ENCODE measurements at regions of chr2 and their contacts with region 1.

Region 1: GRCh38 chr2:52369185-52369584 is 1337.3 kb upstream of the NRXN1 start:
- DNase-seq: no peak
- H3K4me3 ChIP-seq: no peak overlapping the region
- H3K27ac ChIP-seq: no peak overlapping the region
- H3K4me1 ChIP-seq: no peaks in the 10 kb centered on the region
- H3K27me3 ChIP-seq: no peaks in the 10 kb centered on the region
- CTCF ChIP-seq: no peak

Region 2: GRCh38 chr2:53445386-53446072 is 1076.3 kb after region 1 on chr2:
- CTCF ChIA-PET with region 1: no interaction called
- POLR2A ChIA-PET with region 1: interaction called, 10 read pairs
- intact Hi-C with region 1: no loop called
- DNase-seq: peak in 1 of 2 experiments; percentile 55
- H3K4me3 ChIP-seq: peak overlapping the region; percentile 15; the same call in 1 of the 2 replicates
- H3K27ac ChIP-seq: peak overlapping the region; percentile 17
- H3K4me1 ChIP-seq: peaks cover 17% of the 10 kb centered on the region; the same call in 1 of the 2 replicates
- H3K27me3 ChIP-seq: no peaks in the 10 kb centered on the region
- CTCF ChIP-seq: no peak

Measured in PC-9 (cell line).